Gastrocnemius medialis (tissue), 4 donors: ENCODE measurements at regions of chr2 and their contacts with region 1.

Region 1: GRCh38 chr2:32039447-32040219 is at the start of gene DPY30:
- DNase-seq: peak; percentile 84 to 89
- ATAC-seq: peak; percentile 97 to 98
- H3K4me3 ChIP-seq: peak within 1 kb of the TSS; percentile 76 to 99 (median 95)
- H3K27ac ChIP-seq: peak within 1 kb of the TSS; percentile 83 to 92 (median 89)
- H3K4me1 ChIP-seq: peaks cover 9% of the 10 kb centered on the region in 2 donors
- H3K27me3 ChIP-seq: no peaks in the 10 kb centered on the region
- CTCF ChIP-seq: no peak
- POLR2A ChIP-seq: peak; percentile 72 to 75
- total RNA-seq, gene DPY30: 29.3 to 59.8 (median 36.2) TPM

Region 2: DNA sequence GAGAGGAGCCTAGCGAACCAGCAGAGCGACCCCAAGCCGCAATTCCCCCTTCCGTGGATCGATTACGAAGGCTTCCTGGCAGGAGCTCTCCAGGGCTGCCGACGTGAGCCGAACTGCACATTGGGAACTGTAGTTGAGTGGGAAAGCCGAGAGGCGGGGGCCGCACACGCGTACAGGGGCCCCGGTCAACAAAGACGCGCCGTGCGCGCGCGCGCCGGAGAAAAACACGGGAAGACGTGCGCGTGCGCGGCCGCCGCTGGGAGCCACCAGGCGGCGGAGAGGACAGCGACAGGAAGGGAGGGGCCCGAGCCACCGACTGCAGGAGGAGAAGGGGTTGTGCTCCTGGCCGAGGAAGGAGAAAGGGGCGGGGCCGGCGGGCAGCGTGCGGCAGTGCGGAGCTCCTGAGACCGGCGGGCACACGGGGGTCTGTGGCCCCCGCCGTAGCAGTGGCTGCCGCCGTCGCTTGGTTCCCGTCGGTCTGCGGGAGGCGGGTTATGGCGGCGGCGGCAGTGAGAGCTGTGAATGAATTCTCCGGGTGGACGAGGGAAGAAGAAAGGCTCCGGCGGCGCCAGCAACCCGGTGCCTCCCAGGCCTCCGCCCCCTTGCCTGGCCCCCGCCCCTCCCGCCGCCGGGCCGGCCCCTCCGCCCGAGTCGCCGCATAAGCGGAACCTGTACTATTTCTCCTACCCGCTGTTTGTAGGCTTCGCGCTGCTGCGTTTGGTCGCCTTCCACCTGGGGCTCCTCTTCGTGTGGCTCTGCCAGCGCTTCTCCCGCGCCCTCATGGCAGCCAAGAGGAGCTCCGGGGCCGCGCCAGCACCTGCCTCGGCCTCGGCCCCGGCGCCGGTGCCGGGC is 23.9 kb after region 1 on chr2 and contains the start of gene SPAST:
- in situ Hi-C with region 1: no loop called
- intact Hi-C with region 1: loop called (anchors 1 kb)
- DNase-seq: peak; percentile 96 to 97
- ATAC-seq: peak; percentile 96
- H3K4me3 ChIP-seq: peak within 1 kb of the TSS; percentile 68 to 97 (median 82)
- H3K27ac ChIP-seq: peak within 1 kb of the TSS; percentile 86 to 97 (median 88)
- H3K4me1 ChIP-seq: peaks cover 18% of the 10 kb centered on the region in 2 donors
- H3K27me3 ChIP-seq: no peaks in the 10 kb centered on the region
- CTCF ChIP-seq: peak; percentile 77 to 79 (median 77)
- POLR2A ChIP-seq: peak; percentile 71 to 88
- total RNA-seq, gene SPAST: 25.0 to 30.6 (median 28.9) TPM